Activated CD4-positive, alpha-beta memory T cell treated with anti-CD3 and anti-CD28 coated beads for 36 hours (primary cell): ENCODE measurements at regions of chr13 and their contacts with region 1.

Region 1: DNA sequence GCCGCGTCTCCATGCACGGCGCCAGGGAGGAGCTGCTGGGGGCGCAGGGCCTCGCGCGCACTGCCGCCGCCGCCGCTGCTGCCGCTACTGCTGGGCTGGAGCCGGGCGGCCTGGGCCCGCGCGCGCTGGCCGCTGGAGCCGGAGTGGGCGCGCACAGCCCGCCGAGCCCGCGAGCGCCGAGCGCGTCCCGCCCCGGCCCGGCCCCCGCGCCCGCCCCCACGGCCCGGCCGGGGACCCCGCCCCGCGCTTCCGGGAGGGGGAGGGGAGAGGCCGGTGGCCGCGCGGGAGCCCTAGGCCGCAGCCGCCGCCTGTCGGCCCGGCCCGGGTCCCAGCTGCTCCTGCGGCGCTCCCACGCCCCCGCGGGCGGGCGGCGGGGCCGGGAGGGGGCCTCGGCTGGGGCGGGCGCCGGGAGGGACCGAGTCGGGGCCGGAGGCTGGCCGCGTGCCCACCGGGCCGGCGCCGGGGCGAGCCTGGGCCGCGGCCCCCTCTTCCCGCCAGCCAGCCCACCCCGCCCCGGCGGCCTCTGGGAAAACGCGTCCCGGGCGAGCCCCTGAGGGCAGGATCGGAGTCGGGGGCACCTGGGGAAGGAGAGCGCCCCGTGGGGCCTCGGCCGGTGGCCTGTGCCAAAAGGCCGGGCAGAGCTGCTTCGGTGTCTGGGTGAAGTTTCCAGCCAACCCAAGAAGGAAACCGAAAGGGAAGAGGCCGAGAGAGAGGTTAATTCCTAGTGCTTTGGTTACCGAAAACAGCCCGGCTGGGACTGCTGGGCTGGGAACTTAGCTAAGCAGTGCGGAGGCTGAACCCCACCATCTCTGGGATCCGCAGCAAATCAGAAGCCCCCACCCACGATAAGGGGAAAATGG is at the start of gene STK24:
- DNase-seq: peak; percentile 66
- H3K4me3 Mint-ChIP-seq: peak within 1 kb of the TSS; percentile 87
- H3K27ac Mint-ChIP-seq: peak within 1 kb of the TSS; percentile 98
- H3K4me1 Mint-ChIP-seq: peaks cover 40% of the 10 kb centered on the region
- H3K27me3 Mint-ChIP-seq: no peaks in the 10 kb centered on the region
- total RNA-seq, gene STK24: 176 to 178 TPM

Region 2: DNA sequence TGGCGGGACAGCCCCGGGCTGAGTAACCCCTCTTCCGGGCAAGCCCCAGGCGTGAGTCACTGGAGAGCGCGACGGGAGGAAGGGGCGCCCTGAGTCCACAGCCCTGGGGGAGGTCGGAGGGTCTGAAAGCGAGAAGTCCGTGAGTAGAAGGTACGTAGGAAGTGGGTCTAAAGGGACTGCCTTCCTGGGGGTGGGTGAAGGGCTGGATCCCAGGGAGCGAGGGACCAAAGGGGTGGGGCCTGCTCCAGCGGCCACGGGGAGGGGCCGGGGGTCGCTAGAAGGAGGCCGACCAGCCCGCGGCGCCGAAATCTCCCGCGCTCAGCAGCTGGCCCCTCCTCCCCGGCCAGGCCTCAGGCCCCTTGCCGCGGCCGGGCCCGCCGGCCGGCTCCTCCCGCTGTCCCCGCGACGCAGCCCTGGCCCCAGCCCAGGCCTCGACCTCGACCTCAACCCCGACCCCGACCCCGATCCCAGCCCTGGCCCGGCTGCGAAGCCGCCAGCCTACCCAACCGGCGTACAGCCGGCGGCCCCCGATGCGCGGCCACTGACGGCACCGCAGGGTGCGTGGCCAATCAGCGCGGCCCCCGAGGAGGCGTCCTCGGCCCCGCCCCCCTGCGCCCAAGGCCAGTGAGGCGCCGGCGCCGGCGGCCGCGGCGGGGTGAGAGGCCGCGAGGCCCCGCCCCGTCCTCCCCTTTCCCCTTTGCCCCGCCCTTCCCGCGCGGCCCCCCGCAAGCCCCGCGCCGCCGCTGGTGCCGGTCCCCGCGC is 601.2 kb before region 1 on chr13:
- CTCF ChIA-PET with region 1: no interaction called
- POLR2A ChIA-PET with region 1: no interaction called
- intact Hi-C with region 1: loop called (anchors 10 kb)
- DNase-seq: peak; percentile 91
- H3K4me3 Mint-ChIP-seq: peak overlapping the region; percentile 86
- H3K27ac Mint-ChIP-seq: peak overlapping the region; percentile 95
- H3K4me1 Mint-ChIP-seq: peaks cover 31% of the 10 kb centered on the region
- H3K27me3 Mint-ChIP-seq: no peaks in the 10 kb centered on the region

Region 3: GRCh38 chr13:98517576-98518310 is 59.5 kb before region 1 on chr13:
- CTCF ChIA-PET with region 1: no interaction called
- POLR2A ChIA-PET with region 1: interaction called, 7 read pairs
- intact Hi-C with region 1: loop called (anchors 1 kb)
- DNase-seq: peak; percentile 75
- H3K4me3 Mint-ChIP-seq: peak overlapping the region; percentile 53
- H3K27ac Mint-ChIP-seq: peak overlapping the region; percentile 93
- H3K4me1 Mint-ChIP-seq: peaks cover 98% of the 10 kb centered on the region
- H3K27me3 Mint-ChIP-seq: no peaks in the 10 kb centered on the region

Region 4: GRCh38 chr13:98549006-98549727 is 28.0 kb before region 1 on chr13:
- CTCF ChIA-PET with region 1: no interaction called
- POLR2A ChIA-PET with region 1: interaction called, 6 read pairs
- intact Hi-C with region 1: loop called (anchors 1 kb)
- DNase-seq: no peak
- H3K4me3 Mint-ChIP-seq: no peak overlapping the region
- H3K27ac Mint-ChIP-seq: peak overlapping the region; percentile 79
- H3K4me1 Mint-ChIP-seq: peaks cover 84% of the 10 kb centered on the region
- H3K27me3 Mint-ChIP-seq: no peaks in the 10 kb centered on the region

Region 5: DNA sequence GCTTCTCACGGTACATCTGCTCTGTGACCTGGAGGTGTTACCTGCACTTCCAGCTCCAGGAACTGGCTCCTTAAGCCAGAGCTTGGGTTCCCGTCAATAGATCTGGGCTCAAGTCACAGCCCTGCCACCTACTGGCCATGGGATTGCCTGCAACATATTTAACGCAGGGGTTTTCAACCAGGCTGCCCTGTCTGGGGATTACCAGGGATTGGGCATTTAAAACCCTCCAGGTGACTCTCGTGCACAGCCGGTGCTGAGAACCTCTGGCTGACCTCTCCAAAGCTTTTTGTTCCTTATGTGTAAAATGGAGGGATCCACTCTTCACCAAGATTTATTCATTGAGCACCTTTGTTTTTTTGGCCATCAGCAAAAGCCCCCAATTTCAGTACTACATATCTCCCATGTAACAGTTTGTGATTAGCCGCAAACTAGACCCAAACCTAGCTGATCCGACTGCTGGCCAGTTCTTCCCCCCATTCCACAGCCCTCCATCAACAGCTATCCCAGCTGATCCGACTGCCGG is 76.3 kb after region 1 on chr13:
- CTCF ChIA-PET with region 1: interaction called, 10 read pairs
- POLR2A ChIA-PET with region 1: no interaction called
- intact Hi-C with region 1: no loop called
- DNase-seq: peak; percentile 85
- H3K4me3 Mint-ChIP-seq: no peak overlapping the region
- H3K27ac Mint-ChIP-seq: no peak overlapping the region
- H3K4me1 Mint-ChIP-seq: peaks cover 5% of the 10 kb centered on the region
- H3K27me3 Mint-ChIP-seq: peaks cover 4% of the 10 kb centered on the region

Region 6: DNA sequence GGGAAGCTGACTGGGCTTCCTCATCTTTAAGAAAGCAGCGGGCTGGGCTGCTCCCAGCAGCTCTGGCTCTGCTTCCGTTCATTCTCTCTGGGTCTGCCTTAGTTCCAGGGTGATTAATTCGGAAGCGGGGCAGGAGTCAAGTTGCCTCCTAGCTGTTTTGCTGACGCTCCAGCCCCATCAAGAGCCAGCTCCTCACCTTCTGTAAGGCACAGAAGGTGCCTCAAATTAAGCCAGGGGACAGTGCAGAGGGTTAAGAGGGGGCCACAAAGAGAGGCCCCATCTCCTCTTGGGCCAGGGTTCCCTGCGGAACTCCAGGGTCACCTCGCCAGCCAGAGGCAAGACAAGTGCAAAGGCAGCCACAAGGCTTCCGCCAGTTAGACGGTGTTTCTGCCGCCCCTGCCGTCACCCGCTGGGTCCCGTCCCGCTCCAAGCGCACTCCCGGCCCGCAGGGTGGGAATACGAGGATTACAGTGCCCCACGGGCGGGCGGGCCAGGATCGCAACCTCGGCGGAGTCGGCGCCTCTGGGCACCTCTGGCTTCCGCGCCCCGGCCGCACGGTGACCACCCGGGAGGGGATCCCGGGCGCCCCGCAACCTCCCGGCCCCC is 174.8 kb after region 1 on chr13:
- CTCF ChIA-PET with region 1: no interaction called
- POLR2A ChIA-PET with region 1: no interaction called
- intact Hi-C with region 1: no loop called
- DNase-seq: no peak
- H3K4me3 Mint-ChIP-seq: no peak overlapping the region
- H3K27ac Mint-ChIP-seq: no peak overlapping the region
- H3K4me1 Mint-ChIP-seq: no peaks in the 10 kb centered on the region
- H3K27me3 Mint-ChIP-seq: peaks cover 58% of the 10 kb centered on the region

Region 7: DNA sequence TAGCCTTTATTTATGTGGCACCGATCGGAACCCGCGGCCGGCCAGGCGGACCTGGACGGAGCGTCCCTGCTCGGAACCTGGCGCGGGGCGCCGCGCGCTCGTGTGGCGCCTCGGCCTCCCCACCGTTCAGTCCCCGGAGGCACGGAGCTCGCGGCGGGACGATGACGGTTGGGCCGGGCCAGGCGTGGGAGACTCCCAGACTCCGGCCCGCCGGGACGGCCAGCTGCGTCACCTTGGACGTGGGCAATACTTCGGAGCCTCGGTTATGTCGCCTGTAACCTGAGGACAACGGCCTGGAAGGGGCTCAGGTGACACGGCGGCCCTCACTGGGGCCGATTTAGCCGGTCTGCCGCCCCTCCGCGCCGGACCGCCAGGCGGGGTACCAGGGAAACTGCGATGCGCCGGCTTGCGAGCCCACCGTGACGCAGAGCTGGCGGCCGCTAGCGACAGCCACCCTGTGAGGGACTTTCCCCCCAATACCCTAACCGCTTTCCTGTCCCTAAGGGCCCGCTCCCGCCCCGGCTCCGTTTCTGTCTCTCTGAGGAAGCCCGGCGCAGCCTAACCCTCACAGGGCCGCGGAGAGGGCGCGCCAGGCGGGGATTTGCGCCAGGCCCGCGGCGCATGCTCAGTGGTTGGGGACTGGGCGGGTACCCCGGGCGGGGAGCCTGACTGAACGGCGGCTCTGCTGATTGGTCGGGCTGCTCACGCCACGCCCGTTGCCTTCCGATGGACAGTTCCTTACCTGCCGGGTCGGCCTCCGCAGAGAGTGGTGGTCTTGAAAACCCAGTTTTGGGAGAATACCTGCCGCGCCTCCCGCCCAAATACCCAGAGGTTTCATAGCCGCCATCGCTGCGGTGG is 510.1 kb after region 1 on chr13:
- CTCF ChIA-PET with region 1: no interaction called
- POLR2A ChIA-PET with region 1: no interaction called
- intact Hi-C with region 1: loop called (anchors 10 kb)
- DNase-seq: peak; percentile 95
- H3K4me3 Mint-ChIP-seq: peak overlapping the region; percentile 99
- H3K27ac Mint-ChIP-seq: peak overlapping the region; percentile 97
- H3K4me1 Mint-ChIP-seq: peaks cover 32% of the 10 kb centered on the region
- H3K27me3 Mint-ChIP-seq: no peaks in the 10 kb centered on the region